A673 (cell line): ENCODE measurements at regions of chr9 and their contacts with region 1.

Region 1: DNA sequence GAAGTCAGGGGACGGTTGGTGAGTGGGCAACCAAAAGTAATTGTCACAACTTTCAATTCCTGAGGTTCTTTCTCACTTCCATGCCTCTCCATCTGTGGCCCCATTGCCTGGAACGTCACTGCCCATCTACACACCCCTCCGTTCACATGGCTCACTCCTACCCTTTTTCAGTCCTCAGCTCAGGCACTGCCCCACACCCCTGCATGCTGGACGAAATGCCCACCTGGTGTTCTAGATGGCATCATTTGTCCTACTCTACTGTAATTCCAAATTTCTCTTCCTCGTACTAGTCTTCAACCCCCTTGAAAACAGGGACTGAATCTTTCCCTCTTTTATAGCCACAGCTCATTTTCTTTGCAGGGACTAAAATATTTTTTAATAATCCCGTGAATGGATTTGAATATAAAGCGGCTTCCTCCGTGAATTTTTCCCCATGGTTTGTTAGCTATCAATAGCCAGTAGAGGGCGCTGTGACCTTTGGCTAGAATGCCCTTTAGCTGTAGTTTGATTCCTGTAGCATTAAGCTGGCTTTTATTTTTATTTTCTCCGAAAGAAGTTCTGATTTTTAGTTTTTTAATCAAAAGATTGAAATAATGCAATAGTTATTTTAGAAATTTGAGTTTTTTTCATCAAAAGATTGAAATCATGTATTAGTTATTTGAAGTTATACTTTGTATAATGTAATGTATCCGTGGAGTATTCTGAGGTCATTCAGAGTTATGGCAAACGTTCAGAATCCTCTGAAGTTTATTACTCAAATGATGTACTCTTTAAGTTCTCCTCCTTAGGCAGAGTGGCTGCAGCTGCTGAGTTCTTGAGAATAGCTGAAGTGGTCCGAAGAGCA is 232.1 kb downstream of the SH3GL2 start:
- DNase-seq: peak; percentile 37
- H3K4me3 ChIP-seq: no peak overlapping the region
- H3K27ac ChIP-seq: no peak overlapping the region
- H3K4me1 ChIP-seq: no peaks in the 10 kb centered on the region
- H3K27me3 ChIP-seq: no peaks in the 10 kb centered on the region
- CTCF ChIP-seq: peak; percentile 69

Region 2: GRCh38 chr9:17422994-17423680 is 387.8 kb before region 1 on chr9:
- CTCF ChIA-PET with region 1: no interaction called
- POLR2A ChIA-PET with region 1: no interaction called
- intact Hi-C with region 1: no loop called
- DNase-seq: no peak
- H3K4me3 ChIP-seq: no peak overlapping the region
- H3K27ac ChIP-seq: no peak overlapping the region
- H3K4me1 ChIP-seq: no peaks in the 10 kb centered on the region
- H3K27me3 ChIP-seq: no peaks in the 10 kb centered on the region
- CTCF ChIP-seq: no peak

Region 3: GRCh38 chr9:17799383-17799782 is 11.6 kb before region 1 on chr9:
- CTCF ChIA-PET with region 1: no interaction called
- POLR2A ChIA-PET with region 1: no interaction called
- intact Hi-C with region 1: no loop called
- DNase-seq: no peak
- H3K4me3 ChIP-seq: no peak overlapping the region
- H3K27ac ChIP-seq: no peak overlapping the region
- H3K4me1 ChIP-seq: no peaks in the 10 kb centered on the region
- H3K27me3 ChIP-seq: no peaks in the 10 kb centered on the region
- CTCF ChIP-seq: no peak

Region 4: DNA sequence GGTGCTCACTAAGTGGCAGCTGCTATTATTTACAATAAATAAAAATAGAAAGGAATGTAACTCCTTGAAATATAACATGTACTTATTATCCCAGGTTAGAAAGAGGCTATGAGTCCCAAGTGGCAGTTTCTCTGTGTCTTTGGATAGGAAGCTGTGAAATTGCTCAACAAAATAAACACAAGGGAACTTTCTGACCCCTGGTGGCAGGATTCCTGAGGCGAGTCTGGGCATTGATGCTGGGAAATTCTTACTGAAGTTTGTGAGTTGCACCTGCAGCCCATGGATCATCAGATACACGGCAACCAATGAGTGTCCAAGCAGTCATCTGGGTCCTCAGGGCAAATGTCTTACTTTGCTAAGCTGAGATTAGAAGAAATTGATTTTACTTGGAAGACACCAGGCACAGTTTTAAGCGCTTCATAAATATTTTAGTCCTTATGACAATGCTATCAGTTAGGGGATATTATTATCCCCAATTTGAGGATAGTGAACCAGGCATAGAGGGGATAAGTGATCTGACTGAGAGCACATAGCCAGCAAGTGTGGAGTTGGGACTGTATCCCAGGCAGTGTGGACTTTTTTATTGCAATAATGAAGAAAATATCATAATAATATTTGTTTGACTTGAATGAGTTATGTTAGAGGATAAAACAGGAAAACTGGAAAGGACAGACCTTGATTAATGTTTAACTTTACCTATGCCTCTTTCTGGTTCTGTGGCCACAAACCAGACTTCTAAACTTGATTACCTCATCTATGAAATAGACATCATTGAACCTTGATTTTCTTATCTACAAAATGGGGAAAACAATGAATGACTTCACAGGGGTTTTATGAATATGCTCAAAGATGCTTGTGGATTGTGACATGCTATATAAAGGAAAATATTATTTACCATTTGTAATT is 397.5 kb after region 1 on chr9:
- CTCF ChIA-PET with region 1: interaction called, 10 read pairs
- POLR2A ChIA-PET with region 1: no interaction called
- intact Hi-C with region 1: loop called (anchors 2 kb)
- DNase-seq: peak; percentile 1
- H3K4me3 ChIP-seq: no peak overlapping the region
- H3K27ac ChIP-seq: no peak overlapping the region
- H3K4me1 ChIP-seq: no peaks in the 10 kb centered on the region
- H3K27me3 ChIP-seq: no peaks in the 10 kb centered on the region
- CTCF ChIP-seq: peak; percentile 27; the same call in 1 of the 2 replicates

Region 5: GRCh38 chr9:19028835-19029451 is 1218.0 kb after region 1 on chr9:
- CTCF ChIA-PET with region 1: no interaction called
- POLR2A ChIA-PET with region 1: no interaction called
- intact Hi-C with region 1: loop called (anchors 10 kb)
- DNase-seq: peak; percentile 45
- H3K4me3 ChIP-seq: no peak overlapping the region
- H3K27ac ChIP-seq: no peak overlapping the region
- H3K4me1 ChIP-seq: no peaks in the 10 kb centered on the region
- H3K27me3 ChIP-seq: no peaks in the 10 kb centered on the region
- CTCF ChIP-seq: peak; percentile 60